ENCODE measurements at regions of chr1 and their contacts with region 1.

Region 1: DNA sequence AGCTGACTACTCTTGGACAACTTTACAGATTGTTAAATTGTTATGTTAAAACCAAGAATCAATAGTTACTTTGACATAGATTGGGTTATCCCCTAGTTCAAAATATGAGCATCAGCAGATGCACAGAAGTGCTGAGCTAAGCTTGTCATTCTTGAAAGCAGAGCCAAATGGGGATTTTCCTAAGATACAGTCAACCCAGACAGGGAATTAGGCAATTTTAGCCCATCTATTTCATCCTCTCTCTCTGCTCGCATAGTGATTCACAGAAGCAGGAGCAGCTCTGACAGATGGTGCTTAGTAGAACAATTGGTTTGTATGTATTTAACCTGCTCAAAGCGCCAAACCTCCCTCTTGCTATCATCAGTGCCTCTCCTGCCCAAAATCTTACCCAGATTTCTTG is 27.9 kb upstream of the PRRC2C start:
- DNase-seq: no peak
- ATAC-seq: no peak
- H3K4me3 ChIP-seq: no peak overlapping the region
- H3K27ac ChIP-seq: no peak overlapping the region
- H3K4me1 ChIP-seq: no peaks in the 10 kb centered on the region
- H3K27me3 ChIP-seq: peaks cover 2% of the 10 kb centered on the region; the same call in 1 of the 2 replicates
- CTCF ChIP-seq: no peak

Region 2: DNA sequence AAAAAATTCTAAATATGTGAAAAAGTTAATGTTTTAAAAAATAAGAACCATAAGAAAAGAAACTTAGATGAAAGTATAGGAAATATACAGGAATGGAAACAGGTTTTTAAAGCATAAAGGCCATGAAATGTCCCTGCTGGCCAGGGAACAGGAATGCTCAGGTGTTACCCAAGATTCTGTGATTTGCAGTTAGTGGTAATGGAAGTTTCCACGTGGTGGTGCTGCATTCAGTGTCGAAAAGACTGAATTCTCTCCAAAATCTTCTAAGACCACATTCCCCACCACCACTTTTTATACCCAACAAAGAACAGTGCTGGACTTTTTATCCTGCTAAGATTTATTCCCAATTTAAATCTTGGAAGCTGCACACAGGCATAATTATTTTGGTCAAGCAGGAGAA is 667.2 kb before region 1 on chr1:
- CTCF ChIA-PET with region 1: no interaction called
- POLR2A ChIA-PET with region 1: no interaction called
- in situ Hi-C with region 1: no loop called
- intact Hi-C with region 1: loop called (anchors 5 kb)
- DNase-seq: no peak
- ATAC-seq: no peak
- H3K4me3 ChIP-seq: no peak overlapping the region
- H3K27ac ChIP-seq: no peak overlapping the region
- H3K4me1 ChIP-seq: no peaks in the 10 kb centered on the region
- H3K27me3 ChIP-seq: no peaks in the 10 kb centered on the region
- CTCF ChIP-seq: no peak

Region 3: GRCh38 chr1:171521567-171521966 is 64.2 kb after region 1 on chr1:
- CTCF ChIA-PET with region 1: no interaction called
- POLR2A ChIA-PET with region 1: no interaction called
- in situ Hi-C with region 1: no loop called
- intact Hi-C with region 1: no loop called
- DNase-seq: no peak
- ATAC-seq: no peak
- H3K4me3 ChIP-seq: no peak overlapping the region
- H3K27ac ChIP-seq: no peak overlapping the region
- H3K4me1 ChIP-seq: no peaks in the 10 kb centered on the region
- H3K27me3 ChIP-seq: no peaks in the 10 kb centered on the region
- CTCF ChIP-seq: no peak